ENCODE measurements at regions of chr5 and their contacts with region 1.

Region 1: GRCh38 chr5:9544502-9545135 is 1.3 kb downstream of the SEMA5A start:
- DNase-seq: peak; percentile 85 to 95
- ATAC-seq: peak; percentile 92
- H3K4me3 ChIP-seq: peak overlapping the region; percentile 76 to 81
- H3K27ac ChIP-seq: peak overlapping the region in 1 of 2 donors; percentile 7
- H3K4me1 ChIP-seq: no peaks in the 10 kb centered on the region
- H3K27me3 ChIP-seq: no peaks in the 10 kb centered on the region

Region 2: DNA sequence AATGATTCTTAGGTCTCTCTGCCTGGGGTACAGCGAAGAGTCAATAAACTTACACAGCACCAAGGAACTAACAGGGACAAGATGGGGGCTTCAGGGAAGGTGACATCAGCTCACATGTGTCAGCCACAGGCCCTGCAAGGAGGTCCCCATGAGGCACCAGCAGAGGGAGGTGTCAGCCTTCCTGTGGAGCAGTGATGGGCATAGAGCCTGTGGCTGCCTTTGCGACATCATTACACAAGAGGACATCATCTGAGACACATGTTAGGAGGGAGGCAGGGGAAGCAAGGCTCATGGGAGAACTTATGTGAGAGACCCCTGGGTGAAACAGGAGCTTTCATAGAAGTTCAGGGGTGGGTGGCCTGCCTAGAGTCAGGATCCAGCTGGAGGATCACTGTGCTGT is 388.3 kb before region 1 on chr5:
- intact Hi-C with region 1: loop called in 1 of 2 experiments (anchors 10 kb)
- DNase-seq: peak in 1 of 2 donors; percentile 53
- ATAC-seq: peak; percentile 60
- H3K4me3 ChIP-seq: no peak overlapping the region
- H3K27ac ChIP-seq: no peak overlapping the region
- H3K4me1 ChIP-seq: no peaks in the 10 kb centered on the region
- H3K27me3 ChIP-seq: no peaks in the 10 kb centered on the region

Region 3: GRCh38 chr5:9284781-9285307 is 259.8 kb before region 1 on chr5:
- intact Hi-C with region 1: loop called in 1 of 2 experiments (anchors 2 kb)
- DNase-seq: peak in 1 of 2 donors; percentile 64
- ATAC-seq: peak; percentile 74
- H3K4me3 ChIP-seq: no peak overlapping the region
- H3K27ac ChIP-seq: peak overlapping the region; percentile 67 to 89
- H3K4me1 ChIP-seq: peaks cover 0 to 3% of the 10 kb centered on the region in 2 donors
- H3K27me3 ChIP-seq: no peaks in the 10 kb centered on the region

Region 4: DNA sequence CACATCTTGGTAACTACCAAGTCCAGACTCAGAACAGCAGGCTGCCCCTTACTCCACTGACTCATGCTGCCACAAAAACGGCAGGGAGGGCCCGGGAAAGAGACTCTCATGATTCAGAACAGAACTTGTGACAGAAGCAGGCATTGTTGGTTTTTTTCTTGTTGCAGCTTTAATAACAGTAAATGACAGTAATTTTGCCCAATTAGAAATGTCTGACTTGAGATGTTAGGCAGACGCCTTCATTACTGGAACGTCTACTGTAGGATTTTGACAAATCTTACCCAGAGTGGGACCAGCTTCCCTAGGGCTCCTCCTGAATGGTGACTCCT is 76.6 kb before region 1 on chr5:
- intact Hi-C with region 1: loop called in 1 of 2 experiments (anchors 5 kb)
- DNase-seq: peak in 1 of 2 donors; percentile 74
- ATAC-seq: peak; percentile 69
- H3K4me3 ChIP-seq: no peak overlapping the region
- H3K27ac ChIP-seq: no peak overlapping the region
- H3K4me1 ChIP-seq: no peaks in the 10 kb centered on the region
- H3K27me3 ChIP-seq: no peaks in the 10 kb centered on the region

Region 5: GRCh38 chr5:9483243-9483642 is 61.4 kb before region 1 on chr5:
- intact Hi-C with region 1: no loop called
- DNase-seq: no peak
- ATAC-seq: no peak
- H3K4me3 ChIP-seq: no peak overlapping the region
- H3K27ac ChIP-seq: no peak overlapping the region
- H3K4me1 ChIP-seq: no peaks in the 10 kb centered on the region
- H3K27me3 ChIP-seq: no peaks in the 10 kb centered on the region

Region 6: DNA sequence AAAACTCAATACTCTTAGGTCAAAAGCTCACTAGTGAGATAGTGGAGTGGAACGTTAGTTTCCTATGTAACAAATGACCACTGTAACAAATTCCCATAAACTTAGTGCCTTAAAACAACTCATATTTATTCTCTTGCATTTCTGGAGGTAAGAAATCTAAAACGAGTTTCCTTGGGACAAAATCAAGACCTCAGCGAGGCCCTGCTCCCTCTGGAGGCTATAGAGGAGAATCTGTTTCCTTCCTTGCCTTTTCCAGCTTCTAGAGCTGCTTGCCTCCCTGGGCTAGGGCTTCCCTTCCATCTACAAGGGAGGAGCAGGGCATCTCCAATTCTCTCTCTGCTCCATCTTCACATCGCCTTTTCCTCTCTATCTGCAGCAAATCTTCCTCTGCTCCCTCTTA is 30.8 kb before region 1 on chr5:
- intact Hi-C with region 1: no loop called
- DNase-seq: no peak
- ATAC-seq: no peak
- H3K4me3 ChIP-seq: no peak overlapping the region
- H3K27ac ChIP-seq: no peak overlapping the region
- H3K4me1 ChIP-seq: peaks cover 2% of the 10 kb centered on the region in 2 donors
- H3K27me3 ChIP-seq: no peaks in the 10 kb centered on the region

Region 7: GRCh38 chr5:10249948-10250803 is 705.6 kb after region 1 on chr5 and contains the start of gene CCT5:
- intact Hi-C with region 1: loop called in 1 of 2 experiments (anchors 5 kb)
- DNase-seq: peak; percentile 96
- ATAC-seq: peak; percentile 96
- H3K4me3 ChIP-seq: peak within 1 kb of the TSS; percentile 78 to 85
- H3K27ac ChIP-seq: peak within 1 kb of the TSS; percentile 32 to 78
- H3K4me1 ChIP-seq: peaks cover 0 to 7% of the 10 kb centered on the region in 2 donors
- H3K27me3 ChIP-seq: no peaks in the 10 kb centered on the region
- total RNA-seq, gene CCT5: 84.4 to 104 TPM